ENCODE measurements at regions of chr11 and their contacts with region 1.

Region 1: GRCh38 chr11:1988667-1989317 is 8.8 kb downstream of the H19 start:
- DNase-seq: no peak
- ATAC-seq: no peak
- H3K4me3 ChIP-seq: no peak overlapping the region
- H3K27ac ChIP-seq: no peak overlapping the region
- H3K4me1 ChIP-seq: no peaks in the 10 kb centered on the region
- H3K27me3 ChIP-seq: no peaks in the 10 kb centered on the region
- CTCF ChIP-seq: no peak

Region 2: DNA sequence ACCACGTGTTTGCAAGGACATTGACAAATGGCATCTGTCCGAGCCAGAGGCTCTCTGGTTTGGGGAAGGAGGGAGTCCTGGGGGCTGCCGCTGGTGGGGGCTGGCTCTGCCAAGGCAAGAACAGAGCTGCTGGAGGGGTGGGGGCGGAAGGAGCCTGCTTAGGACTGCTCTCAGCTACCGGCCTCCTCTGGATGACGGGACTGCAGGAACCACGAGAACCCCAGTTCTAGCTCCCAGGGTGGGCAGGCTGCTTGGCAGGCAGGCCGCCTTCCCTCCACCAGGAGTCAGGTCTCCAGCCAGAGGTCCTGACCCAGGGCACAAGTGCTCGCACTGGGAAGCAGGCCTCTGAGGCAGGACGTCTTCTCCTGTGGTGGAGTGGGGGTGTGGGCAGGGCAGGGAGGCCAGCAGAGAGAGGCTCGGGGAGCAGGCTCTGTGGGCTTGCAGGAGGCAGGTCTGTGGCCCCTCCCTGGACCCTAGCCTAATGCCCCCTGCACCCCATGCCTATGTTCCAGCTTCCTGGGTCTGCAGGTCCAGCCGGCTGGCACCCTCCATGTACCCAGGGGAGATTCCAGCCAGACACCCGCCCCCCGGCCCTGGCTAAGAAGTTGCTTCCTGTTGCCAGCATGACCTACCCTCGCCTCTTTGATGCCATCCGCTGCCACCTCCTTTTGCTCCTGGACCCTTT is 97.4 kb before region 1 on chr11 and contains the start of gene PRR33:
- CTCF ChIA-PET with region 1: interaction called, 10 read pairs
- POLR2A ChIA-PET with region 1: no interaction called
- in situ Hi-C with region 1: no loop called
- intact Hi-C with region 1: no loop called
- DNase-seq: no peak
- ATAC-seq: peak; percentile 32; the same call in 1 of the 2 replicates
- H3K4me3 ChIP-seq: no peak within 1 kb of the TSS
- H3K27ac ChIP-seq: no peak within 1 kb of the TSS
- H3K4me1 ChIP-seq: no peaks in the 10 kb centered on the region
- H3K27me3 ChIP-seq: peaks cover 4% of the 10 kb centered on the region; the same call in 1 of the 2 replicates
- CTCF ChIP-seq: no peak
- total RNA-seq, gene PRR33: not detected

Region 3: DNA sequence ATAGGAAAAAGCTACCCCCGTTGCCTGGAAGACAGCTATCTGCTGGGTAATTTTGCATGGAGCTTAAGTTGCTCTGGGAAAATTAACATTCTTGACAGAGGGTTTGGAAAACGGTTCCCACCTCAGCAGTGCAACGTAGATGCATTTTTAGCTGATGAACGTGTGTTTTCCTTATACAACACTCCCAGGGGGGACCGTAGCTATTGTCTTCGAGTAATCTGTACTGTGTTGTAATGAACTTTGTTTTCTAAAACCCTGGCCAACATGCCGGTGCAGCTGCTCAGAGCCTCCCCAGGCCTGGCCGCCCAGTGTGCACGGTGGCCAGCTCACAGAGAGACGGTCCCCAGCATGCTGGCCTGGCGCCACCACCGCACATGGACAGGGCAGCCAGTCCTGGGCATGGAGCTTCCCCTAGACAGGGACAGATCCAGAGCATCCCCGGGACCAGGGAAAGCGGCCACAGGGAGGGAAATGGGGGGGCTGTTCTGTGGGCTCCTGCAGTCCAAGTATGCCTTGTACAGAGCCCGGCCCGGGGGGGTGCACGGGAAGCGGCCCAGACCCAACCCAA is 67.1 kb before region 1 on chr11:
- CTCF ChIA-PET with region 1: no interaction called
- POLR2A ChIA-PET with region 1: no interaction called
- in situ Hi-C with region 1: no loop called
- intact Hi-C with region 1: no loop called
- DNase-seq: no peak
- ATAC-seq: no peak; the same call in 1 of the 2 replicates
- H3K4me3 ChIP-seq: no peak overlapping the region
- H3K27ac ChIP-seq: no peak overlapping the region
- H3K4me1 ChIP-seq: peaks cover 14% of the 10 kb centered on the region
- H3K27me3 ChIP-seq: no peaks in the 10 kb centered on the region
- CTCF ChIP-seq: no peak

Region 4: DNA sequence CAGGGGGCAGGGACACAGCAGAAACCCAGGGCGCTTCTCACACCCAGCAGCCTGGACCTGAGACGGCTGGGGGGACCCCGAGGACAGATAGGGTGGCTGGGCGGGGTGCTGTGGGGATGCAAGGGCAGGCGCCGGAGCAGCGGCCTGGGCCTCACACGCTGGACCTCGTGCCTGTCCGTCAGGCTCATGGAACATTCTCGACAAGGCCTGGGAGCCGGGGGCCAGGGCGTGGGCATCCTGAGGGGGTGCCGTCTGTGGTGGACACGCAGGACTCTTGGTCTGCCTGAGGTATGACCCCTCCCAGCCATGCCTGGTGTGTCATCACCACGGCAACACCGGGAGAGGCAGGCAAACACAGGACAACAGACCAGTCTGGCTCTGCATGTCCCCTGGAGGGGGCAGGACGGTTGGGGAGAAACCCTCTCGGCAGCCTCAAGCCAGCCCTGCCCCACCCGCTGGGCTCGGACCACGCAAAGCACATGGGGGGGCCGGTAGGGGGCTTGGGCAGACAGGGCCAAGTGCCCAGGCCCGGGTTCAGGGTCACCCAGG is 20.3 kb before region 1 on chr11:
- CTCF ChIA-PET with region 1: interaction called, 13 read pairs
- POLR2A ChIA-PET with region 1: no interaction called
- in situ Hi-C with region 1: no loop called
- intact Hi-C with region 1: no loop called
- DNase-seq: no peak
- ATAC-seq: peak; percentile 66
- H3K4me3 ChIP-seq: no peak overlapping the region
- H3K27ac ChIP-seq: no peak overlapping the region
- H3K4me1 ChIP-seq: no peaks in the 10 kb centered on the region
- H3K27me3 ChIP-seq: no peaks in the 10 kb centered on the region
- CTCF ChIP-seq: no peak

Region 5: DNA sequence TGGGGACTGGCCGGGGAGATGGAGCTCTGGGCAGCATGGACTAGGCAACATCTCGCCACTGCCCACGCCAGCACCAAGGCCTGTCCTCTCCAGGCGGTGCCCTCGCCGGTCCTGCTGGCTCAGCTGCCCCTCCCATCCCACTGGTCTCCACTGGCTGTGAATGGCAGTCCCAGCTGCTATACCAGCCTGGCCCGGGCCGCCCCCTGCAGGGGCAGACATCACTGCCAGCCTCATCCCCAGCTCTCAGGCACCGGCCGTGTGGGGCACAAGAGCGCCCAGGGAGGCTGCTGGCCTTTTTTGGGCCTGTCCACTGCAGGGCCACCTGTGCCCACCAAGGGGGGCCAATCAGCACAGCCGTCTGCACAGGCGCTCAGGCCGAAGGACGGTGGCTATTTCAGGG is 38.9 kb after region 1 on chr11:
- CTCF ChIA-PET with region 1: no interaction called
- POLR2A ChIA-PET with region 1: interaction called, 22 read pairs
- in situ Hi-C with region 1: no loop called
- intact Hi-C with region 1: no loop called
- DNase-seq: no peak
- ATAC-seq: peak; percentile 15
- H3K4me3 ChIP-seq: no peak overlapping the region
- H3K27ac ChIP-seq: no peak overlapping the region
- H3K4me1 ChIP-seq: no peaks in the 10 kb centered on the region
- H3K27me3 ChIP-seq: no peaks in the 10 kb centered on the region
- CTCF ChIP-seq: no peak